Activated naive CD4-positive, alpha-beta T cell treated with anti-CD3 and anti-CD28 coated beads for 36 hours (primary cell): ENCODE measurements at regions of chr17 and their contacts with region 1.

Region 1: GRCh38 chr17:39153599-39154051 is 2.2 kb upstream of the PLXDC1 start:
- DNase-seq: peak; percentile 96
- H3K4me3 Mint-ChIP-seq: peak overlapping the region; percentile 94
- H3K27ac Mint-ChIP-seq: peak overlapping the region; percentile 95
- H3K4me1 Mint-ChIP-seq: peaks cover 27% of the 10 kb centered on the region
- H3K27me3 Mint-ChIP-seq: peaks cover 4% of the 10 kb centered on the region

Region 2: GRCh38 chr17:38557836-38558727 is 595.5 kb before region 1 on chr17:
- CTCF ChIA-PET with region 1: no interaction called
- intact Hi-C with region 1: loop called (anchors 5 kb)
- DNase-seq: peak; percentile 92
- H3K4me3 Mint-ChIP-seq: peak overlapping the region; percentile 89
- H3K27ac Mint-ChIP-seq: no peak overlapping the region
- H3K4me1 Mint-ChIP-seq: peaks cover 21% of the 10 kb centered on the region
- H3K27me3 Mint-ChIP-seq: peaks cover 26% of the 10 kb centered on the region

Region 3: GRCh38 chr17:38729886-38730525 is 423.6 kb before region 1 on chr17 and contains the start of gene CISD3:
- CTCF ChIA-PET with region 1: interaction called, 5 read pairs
- intact Hi-C with region 1: loop called (anchors 5 kb)
- DNase-seq: peak; percentile 84
- H3K4me3 Mint-ChIP-seq: peak within 1 kb of the TSS; percentile 94
- H3K27ac Mint-ChIP-seq: peak within 1 kb of the TSS; percentile 98
- H3K4me1 Mint-ChIP-seq: peaks cover 83% of the 10 kb centered on the region
- H3K27me3 Mint-ChIP-seq: no peaks in the 10 kb centered on the region
- total RNA-seq, gene CISD3: 35.1 to 35.8 TPM

Region 4: DNA sequence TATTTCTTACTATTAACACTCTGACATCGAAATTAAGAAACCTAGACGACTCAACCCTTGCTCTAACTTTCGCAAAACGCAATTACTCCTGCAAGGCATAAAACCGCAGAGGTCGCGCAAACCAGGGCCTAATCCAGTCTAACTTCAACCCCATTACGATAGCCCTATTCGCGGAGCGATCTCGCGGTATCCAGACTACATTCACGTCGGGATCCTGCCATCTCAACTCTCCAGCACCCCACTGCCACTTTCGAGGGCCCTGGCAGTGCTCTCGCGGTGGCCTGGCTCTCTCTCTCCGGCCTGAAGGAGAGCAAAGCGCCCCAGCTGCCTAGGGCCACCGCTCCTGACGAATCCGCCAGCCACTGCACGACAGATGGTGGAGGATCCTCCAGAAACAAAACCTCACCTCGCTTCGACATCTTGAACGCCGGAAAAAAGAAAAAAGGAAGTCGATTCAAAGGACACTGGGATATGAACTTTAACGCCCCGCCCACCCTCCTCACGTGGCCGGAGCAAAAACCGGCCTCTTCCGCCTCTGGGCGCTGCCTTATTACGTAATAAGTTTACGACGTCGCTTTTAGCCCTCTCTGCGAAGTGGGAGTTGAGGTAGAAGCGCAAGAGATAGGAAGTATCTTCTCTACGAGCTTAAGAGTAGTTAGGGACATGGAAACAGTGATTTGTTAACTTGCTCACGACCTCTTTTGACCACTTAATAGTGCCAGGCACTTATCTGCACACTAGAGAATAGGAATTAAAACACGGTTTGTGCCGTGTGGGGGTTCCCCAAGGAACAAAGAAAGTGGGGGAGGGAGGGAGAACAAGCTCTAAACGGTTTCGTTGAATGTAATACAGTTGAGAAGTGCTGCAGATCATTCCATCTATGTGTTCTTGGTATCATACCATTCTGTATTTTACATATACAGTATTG is 300.1 kb before region 1 on chr17 and contains the start of gene RPL23:
- CTCF ChIA-PET with region 1: interaction called, 7 read pairs
- intact Hi-C with region 1: loop called (anchors 5 kb)
- DNase-seq: peak; percentile 95
- H3K4me3 Mint-ChIP-seq: peak within 1 kb of the TSS; percentile 96
- H3K27ac Mint-ChIP-seq: peak within 1 kb of the TSS; percentile 99
- H3K4me1 Mint-ChIP-seq: peaks cover 43% of the 10 kb centered on the region
- H3K27me3 Mint-ChIP-seq: no peaks in the 10 kb centered on the region
- total RNA-seq, gene RPL23: 2,241 to 2,332 TPM

Region 5: DNA sequence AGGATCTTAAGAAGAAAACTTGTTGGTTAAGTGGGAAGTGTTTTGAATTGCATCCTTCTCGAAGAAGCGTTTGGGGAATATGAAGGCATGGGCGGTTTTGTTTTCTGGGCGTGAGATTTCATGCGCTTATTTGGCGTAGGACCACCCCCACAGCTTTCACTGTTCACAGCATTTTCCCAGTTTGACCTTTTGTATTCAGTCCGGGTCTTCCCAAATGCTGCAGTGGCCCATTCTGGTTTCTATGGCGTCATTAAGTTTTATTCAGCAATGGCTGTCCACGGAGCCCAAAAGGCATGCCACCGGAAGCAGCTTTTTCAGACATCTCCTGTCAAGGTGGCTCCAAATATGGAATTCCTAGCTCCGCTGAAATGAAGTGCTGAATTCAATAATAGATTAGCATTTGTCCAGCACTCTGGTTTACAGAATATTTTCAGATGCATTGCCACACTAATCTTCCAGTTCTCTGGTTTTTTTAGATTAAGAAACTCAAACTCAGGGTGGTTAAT is 95.9 kb before region 1 on chr17:
- CTCF ChIA-PET with region 1: interaction called, 16 read pairs
- intact Hi-C with region 1: loop called (anchors 1 kb)
- DNase-seq: no peak
- H3K4me3 Mint-ChIP-seq: peak overlapping the region; percentile 84
- H3K27ac Mint-ChIP-seq: no peak overlapping the region
- H3K4me1 Mint-ChIP-seq: peaks cover 13% of the 10 kb centered on the region
- H3K27me3 Mint-ChIP-seq: no peaks in the 10 kb centered on the region

Region 6: GRCh38 chr17:39123627-39124026 is 30.0 kb before region 1 on chr17:
- CTCF ChIA-PET with region 1: interaction called, 12 read pairs
- intact Hi-C with region 1: no loop called
- DNase-seq: no peak
- H3K4me3 Mint-ChIP-seq: no peak overlapping the region
- H3K27ac Mint-ChIP-seq: no peak overlapping the region
- H3K4me1 Mint-ChIP-seq: peaks cover under 1% of the 10 kb centered on the region
- H3K27me3 Mint-ChIP-seq: no peaks in the 10 kb centered on the region

Region 7: GRCh38 chr17:39763046-39763820 is 609.6 kb after region 1 on chr17:
- CTCF ChIA-PET with region 1: no interaction called
- intact Hi-C with region 1: no loop called
- DNase-seq: no peak
- H3K4me3 Mint-ChIP-seq: no peak overlapping the region
- H3K27ac Mint-ChIP-seq: no peak overlapping the region
- H3K4me1 Mint-ChIP-seq: peaks cover 65% of the 10 kb centered on the region
- H3K27me3 Mint-ChIP-seq: no peaks in the 10 kb centered on the region